MCF 10A (cell line): ENCODE measurements at regions of chr11 and their contacts with region 1.

Region 1: GRCh38 chr11:118277306-118277705 is 13.2 kb upstream of the MPZL2 start:
- DNase-seq: peak; percentile 67
- H3K4me3 Mint-ChIP-seq: no peak overlapping the region
- H3K27ac Mint-ChIP-seq: no peak overlapping the region
- H3K4me1 Mint-ChIP-seq: peaks cover 26% of the 10 kb centered on the region
- H3K27me3 Mint-ChIP-seq: no peaks in the 10 kb centered on the region
- CTCF ChIP-seq: no peak

Region 2: GRCh38 chr11:118290923-118291322 is 13.6 kb after region 1 on chr11:
- CTCF ChIA-PET with region 1: interaction called, 29 read pairs
- POLR2A ChIA-PET with region 1: interaction called, 8 read pairs
- intact Hi-C with region 1: no loop called
- DNase-seq: peak; percentile 75
- H3K4me3 Mint-ChIP-seq: peak overlapping the region; percentile 19
- H3K27ac Mint-ChIP-seq: no peak overlapping the region
- H3K4me1 Mint-ChIP-seq: peaks cover 19% of the 10 kb centered on the region
- H3K27me3 Mint-ChIP-seq: no peaks in the 10 kb centered on the region
- CTCF ChIP-seq: peak; percentile 43

Region 3: DNA sequence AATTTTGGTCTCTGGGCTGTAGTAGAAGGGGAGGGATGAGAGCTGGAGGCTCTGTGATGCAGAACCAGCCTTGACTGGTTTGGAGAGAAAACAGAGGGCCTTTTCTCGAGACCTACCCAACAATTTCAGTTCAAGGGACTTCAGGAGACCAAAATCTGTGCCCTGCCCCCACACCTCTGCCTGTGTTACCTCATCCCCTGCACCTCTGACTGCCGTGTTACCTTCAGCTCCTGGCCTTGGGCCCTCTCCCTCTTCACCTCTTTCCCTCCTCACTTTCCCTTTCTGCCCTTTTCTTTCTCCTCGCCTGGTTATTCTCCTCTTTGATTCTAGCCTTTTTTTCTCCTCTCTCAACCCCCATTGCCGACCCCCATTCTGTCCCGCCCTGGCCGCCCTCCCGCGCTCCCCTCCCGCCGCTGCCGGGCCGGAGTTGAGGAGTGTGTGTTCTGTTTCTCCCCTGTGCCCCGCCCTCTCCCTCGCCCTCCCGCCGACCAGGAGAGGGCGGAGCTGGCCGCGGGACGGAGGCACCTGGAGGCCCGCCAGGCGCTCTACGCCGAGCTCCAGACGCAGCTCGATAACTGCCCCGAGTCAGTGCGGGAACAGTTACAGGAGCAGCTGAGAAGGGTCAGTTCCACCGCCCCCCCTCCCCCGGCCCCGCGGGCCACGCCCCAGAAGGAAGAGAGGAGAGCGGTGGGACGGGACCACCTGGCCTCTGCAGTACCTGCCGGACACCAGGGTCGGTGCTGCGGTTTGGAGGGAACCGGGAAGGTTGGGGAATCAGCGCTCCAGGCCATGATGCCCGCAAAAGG is 357.3 kb after region 1 on chr11:
- CTCF ChIA-PET with region 1: no interaction called
- POLR2A ChIA-PET with region 1: no interaction called
- intact Hi-C with region 1: no loop called
- DNase-seq: peak; percentile 80
- H3K4me3 Mint-ChIP-seq: peak overlapping the region; percentile 67
- H3K27ac Mint-ChIP-seq: peak overlapping the region; percentile 31
- H3K4me1 Mint-ChIP-seq: peaks cover 17% of the 10 kb centered on the region
- H3K27me3 Mint-ChIP-seq: no peaks in the 10 kb centered on the region
- CTCF ChIP-seq: no peak